ENCODE measurements at regions of chr6 and their contacts with region 1.

Region 1: GRCh38 chr6:156776840-156777576 is at the start of gene ARID1B:
- DNase-seq: peak; percentile 77 to 80 (median 78)
- ATAC-seq: peak; percentile 47 to 70 (median 62)
- H3K4me3 ChIP-seq: peak within 1 kb of the TSS; percentile 53 to 68 (median 66)
- H3K27ac ChIP-seq: peak within 1 kb of the TSS; percentile 97 to 98 (median 97)
- H3K4me1 ChIP-seq: peaks cover 0 to 28% (median 0%) of the 10 kb centered on the region in 4 donors
- H3K27me3 ChIP-seq: no peaks in the 10 kb centered on the region
- CTCF ChIP-seq: no peak
- POLR2A ChIP-seq: peak; percentile 70
- total RNA-seq, gene ARID1B: 23.2 to 35.3 (median 30.7) TPM

Region 2: GRCh38 chr6:156564127-156564806 is 212.7 kb before region 1 on chr6:
- intact Hi-C with region 1: loop called in 1 of 2 experiments (anchors 10 kb)
- DNase-seq: peak; percentile 81 to 84 (median 81)
- ATAC-seq: peak; percentile 98 to 100 (median 100)
- H3K4me3 ChIP-seq: no peak overlapping the region
- H3K27ac ChIP-seq: no peak overlapping the region
- H3K4me1 ChIP-seq: no peaks in the 10 kb centered on the region
- H3K27me3 ChIP-seq: no peaks in the 10 kb centered on the region
- CTCF ChIP-seq: peak; percentile 89 to 96 (median 95)
- POLR2A ChIP-seq: no peak

Region 3: DNA sequence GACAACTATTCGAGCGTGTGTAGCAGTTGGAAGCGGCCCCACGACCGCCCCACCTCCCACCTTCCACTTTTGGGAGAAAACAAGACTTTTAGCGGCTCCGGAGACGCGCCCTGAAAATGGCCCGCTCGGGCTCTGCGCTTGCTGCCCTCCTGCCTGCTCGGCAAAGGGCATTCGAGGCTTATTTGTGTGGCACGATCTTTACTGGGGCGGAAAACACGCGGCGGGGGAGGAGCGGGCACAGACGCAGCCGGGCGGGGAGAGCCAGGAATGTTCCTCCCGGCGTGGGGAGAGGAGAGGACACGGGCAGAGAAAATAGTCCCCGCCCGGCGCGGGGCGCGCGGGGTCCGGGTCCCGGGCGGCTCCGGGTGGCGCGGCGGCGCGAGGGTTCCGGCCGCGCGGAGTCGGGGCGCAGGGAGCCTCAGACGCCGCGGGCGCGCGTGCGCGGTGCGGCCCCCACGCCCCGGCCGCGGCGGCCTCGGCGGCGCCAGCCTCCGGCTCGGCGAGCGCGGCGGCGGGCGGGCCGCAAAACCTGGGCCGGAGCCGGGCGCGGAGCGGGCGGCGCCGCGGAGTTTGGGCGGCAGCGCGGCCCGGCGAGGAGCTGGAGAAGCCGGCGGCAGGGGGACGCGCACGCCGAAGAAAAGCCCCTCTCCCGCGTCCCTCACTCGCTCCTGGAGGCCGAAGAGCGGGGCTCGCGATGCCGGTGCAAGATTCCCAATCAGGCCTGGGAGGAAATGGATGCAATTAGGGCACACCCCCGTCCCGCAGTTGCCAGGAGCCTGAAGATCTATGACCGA is 89.8 kb before region 1 on chr6:
- intact Hi-C with region 1: loop called (anchors 5 to 10 kb)
- DNase-seq: peak; percentile 89 to 96 (median 94)
- ATAC-seq: peak; percentile 87 to 94 (median 92)
- H3K4me3 ChIP-seq: peak overlapping the region; percentile 66 to 71 (median 68)
- H3K27ac ChIP-seq: peak overlapping the region; percentile 94 to 98 (median 95)
- H3K4me1 ChIP-seq: peaks cover 0 to 2% (median 0%) of the 10 kb centered on the region in 4 donors
- H3K27me3 ChIP-seq: no peaks in the 10 kb centered on the region
- CTCF ChIP-seq: peak in 1 of 4 donors; percentile 9
- POLR2A ChIP-seq: peak; percentile 92

Region 4: DNA sequence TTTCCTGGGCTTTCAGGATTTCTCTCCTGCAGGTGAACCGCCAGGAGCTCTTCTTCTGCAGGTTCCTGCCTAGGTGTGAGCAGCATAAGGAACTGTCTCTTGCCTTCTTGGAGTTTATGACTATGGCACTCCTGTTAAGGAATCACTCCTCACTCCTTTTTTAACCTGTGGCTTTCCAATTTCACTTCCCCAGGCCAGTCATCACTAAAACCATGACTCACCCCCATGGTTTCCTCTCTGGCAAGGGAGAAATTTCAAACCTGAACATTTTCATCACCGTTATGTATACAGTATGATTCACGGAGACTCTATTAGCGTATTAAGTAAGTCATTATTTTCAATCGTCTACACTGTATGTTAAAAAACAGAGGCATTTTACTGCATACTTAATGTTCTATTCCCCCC is 78.0 kb before region 1 on chr6:
- intact Hi-C with region 1: loop called in 1 of 2 experiments (anchors 10 kb)
- DNase-seq: no peak
- ATAC-seq: no peak
- H3K4me3 ChIP-seq: no peak overlapping the region
- H3K27ac ChIP-seq: no peak overlapping the region
- H3K4me1 ChIP-seq: peaks cover 0 to 8% (median 0%) of the 10 kb centered on the region in 4 donors
- H3K27me3 ChIP-seq: no peaks in the 10 kb centered on the region
- CTCF ChIP-seq: no peak
- POLR2A ChIP-seq: no peak

Region 5: GRCh38 chr6:156720691-156721685 is 56.0 kb before region 1 on chr6:
- intact Hi-C with region 1: no loop called
- DNase-seq: peak; percentile 58 to 83 (median 70)
- ATAC-seq: peak; percentile 56 to 65 (median 62)
- H3K4me3 ChIP-seq: no peak overlapping the region
- H3K27ac ChIP-seq: peak overlapping the region; percentile 85 to 100 (median 99)
- H3K4me1 ChIP-seq: peaks cover 0 to 25% (median 8%) of the 10 kb centered on the region in 4 donors
- H3K27me3 ChIP-seq: no peaks in the 10 kb centered on the region
- CTCF ChIP-seq: no peak
- POLR2A ChIP-seq: peak; percentile 57

Measured in right lobe of liver (tissue), 6 donors.